ENCODE measurements at regions of chr2 and their contacts with region 1.

Region 1: GRCh38 chr2:159286709-159287441 is 372 bp upstream of the WDSUB1 start:
- DNase-seq: peak; percentile 98
- ATAC-seq: peak; percentile 99
- H3K4me3 ChIP-seq: peak overlapping the region; percentile 65 to 93 (median 85)
- H3K4me3 Mint-ChIP-seq: peak overlapping the region; percentile 95
- H3K27ac ChIP-seq: peak overlapping the region; percentile 78 to 87
- H3K27ac Mint-ChIP-seq: peak overlapping the region; percentile 90
- H3K4me1 ChIP-seq: peaks cover 20 to 26% of the 10 kb centered on the region in 2 donors
- H3K4me1 Mint-ChIP-seq: peaks cover 32% of the 10 kb centered on the region
- H3K27me3 ChIP-seq: no peaks in the 10 kb centered on the region
- H3K27me3 Mint-ChIP-seq: peaks cover 4% of the 10 kb centered on the region
- CTCF ChIP-seq: no peak

Region 2: GRCh38 chr2:158456309-158457066 is 830.4 kb before region 1 on chr2 and contains the starts of genes CCDC148 and PKP4:
- CTCF ChIA-PET with region 1: no interaction called
- POLR2A ChIA-PET with region 1: no interaction called
- intact Hi-C with region 1: loop called (anchors 10 kb)
- DNase-seq: peak; percentile 92
- ATAC-seq: peak; percentile 93
- H3K4me3 ChIP-seq: peak within 1 kb of the TSS; percentile 57 to 83 (median 69)
- H3K4me3 Mint-ChIP-seq: peak within 1 kb of the TSS; percentile 90
- H3K27ac ChIP-seq: peak within 1 kb of the TSS in 1 of 2 donors; percentile 7
- H3K27ac Mint-ChIP-seq: peak within 1 kb of the TSS; percentile 69
- H3K4me1 ChIP-seq: peaks cover 12 to 16% of the 10 kb centered on the region in 2 donors
- H3K4me1 Mint-ChIP-seq: peaks cover 17% of the 10 kb centered on the region
- H3K27me3 ChIP-seq: peaks cover 0 to 29% (median 9%) of the 10 kb centered on the region in 4 experiments
- H3K27me3 Mint-ChIP-seq: peaks cover 24% of the 10 kb centered on the region
- CTCF ChIP-seq: no peak
- total RNA-seq, gene CCDC148: 0.56 TPM in 1 of 2 replicates, not detected in the other
- total RNA-seq, gene PKP4: 13.3 and 13.5 TPM in 2 replicates

Region 3: GRCh38 chr2:159118115-159118858 is 168.6 kb before region 1 on chr2:
- CTCF ChIA-PET with region 1: no interaction called
- POLR2A ChIA-PET with region 1: no interaction called
- intact Hi-C with region 1: no loop called
- DNase-seq: peak; percentile 79
- ATAC-seq: peak; percentile 63
- H3K4me3 ChIP-seq: no peak overlapping the region
- H3K4me3 Mint-ChIP-seq: no peak overlapping the region
- H3K27ac ChIP-seq: no peak overlapping the region
- H3K27ac Mint-ChIP-seq: no peak overlapping the region
- H3K4me1 ChIP-seq: peaks cover 0 to 6% of the 10 kb centered on the region in 2 donors
- H3K4me1 Mint-ChIP-seq: peaks cover 5% of the 10 kb centered on the region
- H3K27me3 ChIP-seq: peaks cover 0 to 2% (median 0%) of the 10 kb centered on the region in 4 experiments
- H3K27me3 Mint-ChIP-seq: peaks cover 5% of the 10 kb centered on the region
- CTCF ChIP-seq: peak; percentile 86

Region 4: DNA sequence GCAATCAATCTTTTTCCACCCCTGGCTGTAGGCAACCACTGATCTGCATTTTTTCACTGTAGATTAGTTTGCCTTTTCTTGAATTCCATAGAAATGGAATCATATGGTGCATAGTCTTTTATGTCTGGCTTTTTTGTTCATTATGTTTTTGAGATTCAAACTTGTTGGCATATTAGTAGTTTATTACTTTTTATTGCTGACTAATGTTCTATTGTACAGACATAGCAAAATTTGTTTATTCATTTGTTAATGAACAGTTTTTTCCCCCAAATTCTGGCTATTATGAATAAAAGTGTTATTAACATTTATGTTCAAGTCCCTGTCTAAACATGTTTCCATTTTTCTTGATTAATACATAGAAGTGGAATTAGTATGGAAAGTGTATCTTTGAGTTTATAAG is 21.1 kb after region 1 on chr2:
- CTCF ChIA-PET with region 1: no interaction called
- POLR2A ChIA-PET with region 1: no interaction called
- intact Hi-C with region 1: no loop called
- DNase-seq: no peak
- ATAC-seq: no peak
- H3K4me3 ChIP-seq: no peak overlapping the region
- H3K4me3 Mint-ChIP-seq: no peak overlapping the region
- H3K27ac ChIP-seq: no peak overlapping the region
- H3K27ac Mint-ChIP-seq: no peak overlapping the region
- H3K4me1 ChIP-seq: no peaks in the 10 kb centered on the region
- H3K4me1 Mint-ChIP-seq: no peaks in the 10 kb centered on the region
- H3K27me3 ChIP-seq: no peaks in the 10 kb centered on the region
- H3K27me3 Mint-ChIP-seq: peaks cover 4% of the 10 kb centered on the region
- CTCF ChIP-seq: no peak

Region 5: GRCh38 chr2:159516241-159516766 is 229.4 kb after region 1 on chr2:
- CTCF ChIA-PET with region 1: no interaction called
- POLR2A ChIA-PET with region 1: no interaction called
- intact Hi-C with region 1: loop called (anchors 2 kb)
- DNase-seq: peak; percentile 80
- ATAC-seq: peak; percentile 86
- H3K4me3 ChIP-seq: peak overlapping the region; percentile 35 to 91 (median 67)
- H3K4me3 Mint-ChIP-seq: peak overlapping the region; percentile 78
- H3K27ac ChIP-seq: peak overlapping the region; percentile 49 to 79
- H3K27ac Mint-ChIP-seq: peak overlapping the region; percentile 92
- H3K4me1 ChIP-seq: peaks cover 8 to 27% of the 10 kb centered on the region in 2 donors
- H3K4me1 Mint-ChIP-seq: peaks cover 23% of the 10 kb centered on the region
- H3K27me3 ChIP-seq: no peaks in the 10 kb centered on the region
- H3K27me3 Mint-ChIP-seq: no peaks in the 10 kb centered on the region
- CTCF ChIP-seq: no peak

Region 6: DNA sequence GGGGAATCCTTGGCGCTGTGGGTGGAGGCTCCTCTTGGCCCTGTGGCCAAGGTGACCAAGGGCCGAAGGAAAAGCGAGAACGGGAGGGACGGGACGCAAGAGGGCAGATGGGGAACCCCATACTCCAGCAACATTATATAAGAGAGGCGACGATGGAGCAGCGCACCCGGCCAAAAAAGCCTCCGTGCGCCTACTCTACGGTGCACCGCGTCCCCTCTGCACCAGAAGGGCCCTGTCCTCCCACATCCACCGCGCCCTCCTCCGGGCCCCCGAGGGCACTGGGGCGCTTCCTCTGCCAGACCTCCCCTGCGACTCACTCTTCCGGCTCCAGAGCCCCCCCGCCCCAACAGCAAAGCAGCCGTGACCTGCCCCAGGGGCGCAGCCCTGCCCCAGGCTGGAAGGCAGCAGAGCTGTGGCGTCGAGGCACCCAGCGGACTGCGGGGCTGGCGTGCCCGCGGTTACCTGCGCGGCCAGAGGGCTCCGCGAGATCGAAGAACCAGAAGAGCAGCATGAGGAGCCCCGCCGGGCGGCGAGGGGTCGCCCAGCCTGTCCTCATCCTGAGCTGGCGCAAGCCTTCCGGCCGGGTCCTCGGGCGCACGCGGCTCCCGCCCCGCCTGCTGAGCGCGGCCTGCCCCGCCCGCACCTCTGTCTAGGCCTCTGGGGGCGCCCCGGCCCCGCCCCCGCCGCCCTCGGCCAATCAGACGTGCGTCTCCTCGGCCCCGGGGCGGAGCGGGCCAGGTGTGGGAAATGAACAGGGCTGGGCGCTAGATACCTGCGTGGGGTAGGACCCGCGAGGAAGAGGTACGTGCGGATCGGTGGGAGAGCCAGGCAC is 617.5 kb after region 1 on chr2:
- CTCF ChIA-PET with region 1: no interaction called
- POLR2A ChIA-PET with region 1: no interaction called
- intact Hi-C with region 1: loop called (anchors 1 kb)
- DNase-seq: peak; percentile 90
- ATAC-seq: peak; percentile 85
- H3K4me3 ChIP-seq: peak within 1 kb of the TSS; percentile 69 to 96 (median 79)
- H3K4me3 Mint-ChIP-seq: peak within 1 kb of the TSS; percentile 100
- H3K27ac ChIP-seq: peak within 1 kb of the TSS; percentile 85 to 87
- H3K27ac Mint-ChIP-seq: peak within 1 kb of the TSS; percentile 99
- H3K4me1 ChIP-seq: peaks cover 7 to 26% of the 10 kb centered on the region in 2 donors
- H3K4me1 Mint-ChIP-seq: peaks cover 41% of the 10 kb centered on the region
- H3K27me3 ChIP-seq: no peaks in the 10 kb centered on the region
- H3K27me3 Mint-ChIP-seq: no peaks in the 10 kb centered on the region
- CTCF ChIP-seq: no peak

Region 7: GRCh38 chr2:160516547-160517365 is 1229.9 kb after region 1 on chr2:
- CTCF ChIA-PET with region 1: no interaction called
- POLR2A ChIA-PET with region 1: no interaction called
- intact Hi-C with region 1: no loop called
- DNase-seq: no peak
- ATAC-seq: peak; percentile 61
- H3K4me3 ChIP-seq: no peak overlapping the region
- H3K4me3 Mint-ChIP-seq: peak overlapping the region; percentile 32
- H3K27ac ChIP-seq: no peak overlapping the region
- H3K27ac Mint-ChIP-seq: peak overlapping the region; percentile 32
- H3K4me1 ChIP-seq: peaks cover 0 to 6% of the 10 kb centered on the region in 2 donors
- H3K4me1 Mint-ChIP-seq: peaks cover 14% of the 10 kb centered on the region
- H3K27me3 ChIP-seq: peaks cover 0 to 4% (median 0%) of the 10 kb centered on the region in 4 experiments
- H3K27me3 Mint-ChIP-seq: peaks cover 13% of the 10 kb centered on the region
- CTCF ChIP-seq: no peak

Measured in B cell (primary cell).